Panc1 (cell line): ENCODE measurements at regions of chr11 and their contacts with region 1.

Region 1: DNA sequence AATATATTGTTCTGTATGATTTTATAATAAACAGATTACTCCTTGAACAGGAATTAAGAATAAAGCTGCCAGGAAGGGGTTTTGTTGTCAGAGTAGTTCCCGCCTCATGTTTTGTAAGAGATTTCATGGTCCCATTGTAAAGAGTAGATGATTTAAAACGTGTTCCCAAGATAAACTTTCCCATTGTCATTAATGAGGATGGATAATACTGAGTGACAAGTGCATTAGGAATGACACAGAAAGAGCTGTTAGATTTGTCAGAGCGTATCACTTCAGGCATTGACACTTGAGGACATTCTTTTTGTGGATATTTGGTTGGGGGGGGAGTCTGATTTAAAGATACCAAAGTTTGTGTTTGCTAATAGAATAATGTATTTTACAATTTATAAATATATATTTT is 147.0 kb downstream of the PAX6 start:
- DNase-seq: no peak
- ATAC-seq: no peak
- H3K4me3 ChIP-seq: no peak overlapping the region
- H3K27ac ChIP-seq: no peak overlapping the region
- H3K4me1 ChIP-seq: no peaks in the 10 kb centered on the region
- H3K27me3 ChIP-seq: no peaks in the 10 kb centered on the region
- CTCF ChIP-seq: no peak

Region 2: DNA sequence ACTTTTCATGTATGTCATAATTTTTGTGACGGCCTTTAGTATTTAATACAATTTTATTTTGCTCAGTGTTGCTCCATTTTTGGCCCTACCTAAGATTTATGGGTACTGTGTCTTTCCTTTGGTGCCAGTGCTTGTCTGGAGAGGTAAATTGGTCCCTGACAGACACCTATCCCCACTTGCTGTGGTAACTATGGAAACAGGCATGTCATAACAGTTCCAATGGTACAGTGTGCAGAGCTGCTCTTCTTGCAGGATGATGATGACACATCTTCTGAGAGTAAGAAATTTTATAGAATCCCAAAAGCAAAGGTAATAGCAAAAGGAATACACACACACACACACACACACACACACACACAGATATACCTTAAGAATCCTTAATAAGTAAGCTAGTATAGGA is 36.0 kb before region 1 on chr11:
- CTCF ChIA-PET with region 1: no interaction called
- POLR2A ChIA-PET with region 1: interaction called, 10 read pairs
- in situ Hi-C with region 1: no loop called
- intact Hi-C with region 1: no loop called
- DNase-seq: no peak
- ATAC-seq: no peak
- H3K4me3 ChIP-seq: no peak overlapping the region
- H3K27ac ChIP-seq: no peak overlapping the region
- H3K4me1 ChIP-seq: no peaks in the 10 kb centered on the region
- H3K27me3 ChIP-seq: no peaks in the 10 kb centered on the region
- CTCF ChIP-seq: no peak

Region 3: DNA sequence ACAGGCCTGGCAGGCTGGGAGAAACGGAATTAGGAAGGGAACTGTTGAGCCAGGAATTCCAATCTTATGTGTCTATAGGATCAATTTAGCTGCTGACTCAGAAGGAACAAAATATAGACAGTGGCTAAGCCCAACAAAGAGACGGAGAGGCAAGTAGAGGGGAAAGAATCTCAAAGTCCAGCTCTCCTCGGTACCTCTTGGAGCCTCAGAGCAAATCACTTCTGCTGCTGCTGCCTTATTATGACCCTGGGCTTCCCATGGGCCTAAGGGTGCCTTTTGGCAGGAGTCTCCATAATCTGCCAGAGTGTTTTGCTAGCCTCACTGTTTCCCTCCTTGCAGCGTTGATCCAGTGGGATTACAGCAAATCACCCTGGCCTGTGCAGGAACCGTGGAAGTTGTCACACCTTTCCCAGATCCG is 115.3 kb after region 1 on chr11:
- CTCF ChIA-PET with region 1: no interaction called
- POLR2A ChIA-PET with region 1: no interaction called
- in situ Hi-C with region 1: no loop called
- intact Hi-C with region 1: no loop called
- DNase-seq: peak; percentile 4
- ATAC-seq: 0 out of 2 replicates have a peak, but pooled peaks have one; percentile 34
- H3K4me3 ChIP-seq: no peak overlapping the region
- H3K27ac ChIP-seq: no peak overlapping the region
- H3K4me1 ChIP-seq: no peaks in the 10 kb centered on the region
- H3K27me3 ChIP-seq: no peaks in the 10 kb centered on the region
- CTCF ChIP-seq: no peak